HEK293T (cell line): ENCODE measurements at regions of chr17 and their contacts with region 1.

Region 1: GRCh38 chr17:57243171-57243948 is 13.0 kb upstream of the MSI2 start:
- DNase-seq: peak; percentile 86

Region 2: DNA sequence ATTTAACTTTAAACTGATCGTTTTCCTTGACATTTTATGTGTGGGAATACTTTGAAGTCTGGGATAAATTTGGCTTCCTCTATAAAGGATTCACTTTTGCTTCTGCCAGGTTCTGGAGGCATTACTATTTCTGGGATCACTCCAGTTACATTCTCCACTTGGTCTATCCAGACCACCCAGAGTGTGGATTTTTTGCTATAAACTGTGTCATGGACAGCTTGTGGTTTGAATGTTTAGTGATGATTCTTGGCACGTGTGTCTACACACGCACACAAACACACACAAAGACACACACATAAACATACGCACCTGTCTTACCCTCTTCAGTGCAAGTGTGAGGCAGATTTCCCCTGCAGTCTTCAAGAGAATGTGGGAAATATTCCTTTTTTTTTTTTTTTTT is 14.4 kb before region 1 on chr17:
- CTCF ChIA-PET with region 1: interaction called, 15 read pairs
- POLR2A ChIA-PET with region 1: no interaction called
- DNase-seq: no peak

Region 3: GRCh38 chr17:57255182-57255775 is 11.9 kb after region 1 on chr17:
- CTCF ChIA-PET with region 1: interaction called, 19 read pairs
- POLR2A ChIA-PET with region 1: interaction called, 4 read pairs
- DNase-seq: no peak

Region 4: DNA sequence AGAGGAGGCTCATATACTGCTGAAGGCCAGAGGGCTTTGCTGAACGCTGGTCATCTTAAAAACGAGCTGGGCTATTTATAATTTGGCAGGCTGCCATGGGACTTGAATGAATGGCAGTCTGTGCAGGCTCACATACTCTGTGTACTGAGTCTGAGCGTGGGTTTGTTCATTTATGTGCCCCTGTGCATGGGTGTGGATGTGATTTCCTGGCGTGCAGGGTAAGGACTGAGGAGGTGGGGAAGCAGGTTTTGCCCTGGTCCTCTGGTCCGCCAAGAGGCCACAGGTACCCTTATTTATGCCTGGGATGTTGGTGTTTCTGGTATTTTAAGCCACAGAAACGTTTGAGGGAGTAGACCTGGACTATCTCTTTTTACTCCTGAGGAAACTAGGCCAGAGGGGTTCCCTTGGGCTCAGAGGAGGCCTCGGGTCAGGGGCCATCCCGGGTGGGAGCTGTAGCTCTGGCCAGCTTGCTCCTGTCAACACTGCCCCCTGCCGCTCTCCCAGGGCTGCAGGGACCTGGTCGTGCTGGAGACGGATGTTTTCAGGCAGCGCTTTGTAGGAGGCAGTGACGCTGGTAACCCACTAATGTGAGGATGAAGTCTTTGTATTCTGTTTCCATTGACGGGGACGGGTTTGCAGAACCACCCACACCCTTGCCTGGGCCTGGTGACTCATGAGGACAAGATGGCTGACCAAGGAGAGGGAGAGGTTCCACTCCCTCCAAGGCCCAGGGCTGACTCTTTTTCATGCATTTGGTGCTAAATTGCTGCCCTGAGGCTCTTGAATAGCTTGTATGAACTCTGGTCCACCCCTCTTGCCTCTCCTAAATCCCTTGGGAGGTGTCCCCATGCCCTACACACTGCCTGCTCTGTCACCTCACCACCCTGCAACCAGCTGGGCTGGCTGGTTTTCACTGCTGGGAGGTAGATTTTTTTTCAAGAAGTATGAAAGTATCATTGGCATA is 197.4 kb after region 1 on chr17:
- CTCF ChIA-PET with region 1: interaction called, 22 read pairs
- POLR2A ChIA-PET with region 1: no interaction called
- DNase-seq: peak; percentile 57